Transverse colon (tissue), 4 donors: ENCODE measurements at regions of chr4 and their contacts with region 1.

Region 1: GRCh38 chr4:155758481-155759404 is at the start of gene GUCY1B1:
- DNase-seq: peak; percentile 81
- H3K4me3 ChIP-seq: peak within 1 kb of the TSS; percentile 37 to 82 (median 54)
- H3K27ac ChIP-seq: peak within 1 kb of the TSS; percentile 77 to 94 (median 82)
- H3K4me1 ChIP-seq: peaks cover 0 to 12% (median 6%) of the 10 kb centered on the region in 4 donors
- H3K27me3 ChIP-seq: peaks cover 18% of the 10 kb centered on the region
- CTCF ChIP-seq: peak in 3 of 5 experiments; percentile 6 to 23 (median 17)
- EP300 ChIP-seq: no peak
- POLR2A ChIP-seq: no peak
- total RNA-seq, gene GUCY1B1: 6.0 to 20.3 (median 10.6) TPM

Region 2: DNA sequence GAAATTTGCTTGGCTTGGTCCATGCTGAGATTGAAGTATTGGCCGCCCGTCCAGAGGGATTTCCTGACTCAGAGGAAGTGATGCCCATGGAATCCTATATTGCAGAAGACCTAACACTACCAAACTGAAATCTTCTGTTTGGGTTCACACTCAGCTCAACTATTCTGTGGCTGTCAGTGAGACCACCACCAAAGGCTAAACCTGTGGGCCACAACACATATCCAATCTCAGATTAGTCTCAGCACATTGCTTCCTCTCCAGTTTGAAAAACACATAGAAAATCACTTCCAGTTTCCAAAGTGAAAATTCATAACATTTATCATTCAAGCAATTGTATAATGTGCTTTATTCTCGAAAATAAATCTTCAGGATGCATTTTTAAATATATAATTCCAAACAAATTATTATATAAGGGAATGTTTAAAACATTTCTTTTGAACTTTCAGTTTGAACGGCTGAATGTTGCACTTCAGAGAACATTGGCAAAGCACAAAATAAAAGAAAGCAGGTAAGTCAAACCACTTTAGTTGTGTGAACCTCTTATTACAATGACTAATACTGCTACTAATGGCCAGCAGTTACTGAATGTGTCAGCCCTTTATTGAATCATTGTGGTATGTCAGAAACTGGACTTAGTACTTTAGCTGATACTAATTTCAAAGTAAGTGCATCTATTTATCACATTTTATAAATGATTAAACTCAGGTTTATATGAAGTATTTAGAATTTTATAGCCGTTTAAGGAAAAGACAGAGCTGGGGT is 55.1 kb before region 1 on chr4:
- in situ Hi-C with region 1: no loop called
- intact Hi-C with region 1: loop called (anchors 10 kb)
- DNase-seq: no peak
- H3K4me3 ChIP-seq: no peak overlapping the region
- H3K27ac ChIP-seq: no peak overlapping the region
- H3K4me1 ChIP-seq: peaks cover 0 to 3% (median 0%) of the 10 kb centered on the region in 4 donors
- H3K27me3 ChIP-seq: no peaks in the 10 kb centered on the region
- CTCF ChIP-seq: no peak
- EP300 ChIP-seq: no peak
- POLR2A ChIP-seq: no peak

Region 3: DNA sequence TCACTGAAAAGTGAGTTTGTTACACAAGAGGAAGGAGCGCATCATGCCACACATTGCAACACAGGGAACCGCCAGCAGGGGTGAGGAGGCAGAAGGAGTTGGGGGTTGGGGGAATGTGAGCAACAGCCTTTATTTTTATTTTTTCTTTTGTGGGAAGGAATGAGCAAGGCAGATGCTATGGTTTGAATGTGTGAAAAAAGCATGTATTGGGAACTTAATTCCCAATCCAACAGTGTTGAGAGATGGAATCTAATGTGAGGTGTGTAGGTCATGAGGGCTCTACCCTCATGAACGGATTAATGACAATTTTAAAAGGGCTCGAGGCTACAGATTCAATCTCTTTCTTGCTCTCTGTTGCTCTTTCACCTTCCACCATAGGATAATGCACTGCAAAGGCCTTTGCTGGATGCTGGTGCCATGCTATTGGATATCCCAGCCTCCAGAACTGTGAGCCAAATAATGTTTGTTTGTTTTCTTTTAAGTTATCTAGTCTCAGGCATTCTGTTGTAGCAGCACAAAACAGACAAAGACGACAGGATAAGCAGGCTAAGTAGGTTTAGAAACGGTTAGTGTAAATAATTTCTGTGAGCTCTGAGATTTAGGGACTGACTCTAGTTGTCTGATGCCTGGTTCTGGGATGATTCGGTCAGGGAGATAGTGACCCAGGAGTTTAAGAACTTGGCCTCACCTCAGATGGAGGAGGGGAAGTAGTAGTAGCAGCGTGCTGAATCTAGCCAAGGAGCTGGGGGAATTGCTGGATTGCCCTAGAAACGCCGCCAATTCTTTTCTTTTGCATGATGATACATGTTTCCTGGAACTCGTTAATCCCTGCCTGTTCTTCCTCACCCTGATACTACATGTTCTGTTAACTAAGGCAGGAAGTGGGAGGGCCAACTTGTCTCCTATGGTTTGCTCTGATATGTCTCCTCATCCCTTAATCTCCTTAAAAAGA is 351.5 kb after region 1 on chr4:
- in situ Hi-C with region 1: no loop called
- intact Hi-C with region 1: no loop called
- DNase-seq: no peak
- H3K4me3 ChIP-seq: no peak overlapping the region
- H3K27ac ChIP-seq: peak overlapping the region in 3 of 4 donors; percentile 21 to 57 (median 40)
- H3K4me1 ChIP-seq: peaks cover 0 to 9% (median 0%) of the 10 kb centered on the region in 4 donors
- H3K27me3 ChIP-seq: no peaks in the 10 kb centered on the region
- CTCF ChIP-seq: no peak
- EP300 ChIP-seq: no peak
- POLR2A ChIP-seq: no peak